SK-N-SH (cell line): ENCODE measurements at regions of chr3 and their contacts with region 1.

Region 1: GRCh38 chr3:171566803-171567422 is 106.7 kb upstream of the TNIK start:
- DNase-seq: peak; percentile 50
- H3K4me3 ChIP-seq: no peak overlapping the region
- H3K27ac ChIP-seq: no peak overlapping the region
- H3K4me1 ChIP-seq: no peaks in the 10 kb centered on the region; a peak in 1 of 4 replicates
- H3K27me3 ChIP-seq: no peaks in the 10 kb centered on the region
- CTCF ChIP-seq: peak; percentile 88
- EP300 ChIP-seq: no peak
- RAD21 ChIP-seq: peak; percentile 96

Region 2: DNA sequence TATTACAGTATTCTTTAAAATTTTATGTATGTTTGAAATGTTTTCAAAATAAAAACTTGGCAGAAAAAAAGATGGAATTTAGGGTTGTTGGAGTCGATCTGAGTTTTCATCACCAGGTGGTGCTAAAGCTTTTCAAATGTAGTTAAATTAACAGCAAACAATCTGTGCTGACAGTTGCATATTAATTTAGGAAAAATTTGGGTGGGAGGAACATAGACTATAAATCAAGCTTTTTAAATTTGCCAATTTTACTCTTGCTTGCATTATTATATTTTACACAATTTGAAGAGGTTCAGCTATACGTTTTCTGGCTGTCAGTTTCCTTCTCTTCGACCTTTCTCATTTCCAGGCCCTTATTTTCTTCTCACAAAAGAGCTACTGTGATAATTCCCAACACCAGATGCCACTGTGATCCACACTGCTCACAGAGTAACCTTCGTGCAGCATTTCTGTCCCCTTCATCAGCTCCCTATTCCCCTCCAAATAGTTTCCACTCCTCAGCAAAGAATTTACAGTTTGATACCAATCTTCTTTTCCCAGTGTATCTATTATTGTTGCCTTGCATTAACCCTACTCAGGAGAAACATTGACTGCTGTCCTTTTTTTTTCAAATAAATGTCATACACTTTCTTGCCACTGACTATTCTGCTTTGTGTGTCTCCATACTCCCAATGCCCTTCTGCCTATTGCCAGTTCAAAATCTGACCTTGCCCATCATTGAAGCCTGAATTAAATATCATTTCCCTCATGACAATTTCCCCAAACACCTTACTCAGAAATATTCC is 605.1 kb before region 1 on chr3:
- CTCF ChIA-PET with region 1: interaction called, 36 read pairs
- POLR2A ChIA-PET with region 1: no interaction called
- DNase-seq: peak; percentile 26
- H3K4me3 ChIP-seq: no peak overlapping the region
- H3K27ac ChIP-seq: peak overlapping the region in 1 of 2 experiments; percentile 2; a peak in 1 of 4 replicates
- H3K4me1 ChIP-seq: no peaks in the 10 kb centered on the region
- H3K27me3 ChIP-seq: no peaks in the 10 kb centered on the region
- CTCF ChIP-seq: peak; percentile 83
- EP300 ChIP-seq: no peak
- RAD21 ChIP-seq: peak; percentile 87

Region 3: DNA sequence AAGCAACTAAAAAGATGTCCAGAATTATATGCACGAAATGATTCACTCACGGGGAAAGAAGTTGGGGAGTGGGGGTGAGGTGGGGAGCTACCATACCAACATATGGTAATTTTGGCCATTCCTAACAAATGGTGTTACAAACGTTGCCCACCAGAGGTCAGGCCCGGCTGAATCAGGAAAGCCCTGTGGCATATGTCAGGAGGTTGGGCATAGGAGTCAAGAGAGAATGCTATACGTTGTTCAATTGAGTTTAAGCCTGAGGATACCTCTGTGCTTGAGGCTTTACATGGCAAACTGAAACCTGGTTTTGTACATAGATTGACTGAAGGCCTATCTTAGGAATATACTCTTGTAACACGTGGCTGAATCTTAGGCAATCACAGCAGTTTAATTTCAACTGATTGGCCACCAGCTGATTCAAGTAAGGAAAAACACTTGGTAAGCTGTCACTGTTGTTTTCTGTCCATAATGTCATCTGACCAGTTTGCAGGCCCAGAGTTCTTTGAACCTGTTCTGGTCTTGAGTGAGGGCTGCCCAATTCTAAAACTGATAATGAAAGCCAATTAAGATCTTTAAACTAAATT is 517.0 kb before region 1 on chr3:
- CTCF ChIA-PET with region 1: interaction called, 57 read pairs
- POLR2A ChIA-PET with region 1: no interaction called
- DNase-seq: peak; percentile 63
- H3K4me3 ChIP-seq: no peak overlapping the region
- H3K27ac ChIP-seq: no peak overlapping the region
- H3K4me1 ChIP-seq: peaks cover 0 to 2% of the 10 kb centered on the region in 2 experiments; a peak in 1 of 4 replicates
- H3K27me3 ChIP-seq: no peaks in the 10 kb centered on the region
- CTCF ChIP-seq: peak; percentile 73
- EP300 ChIP-seq: no peak
- RAD21 ChIP-seq: peak; percentile 88

Region 4: GRCh38 chr3:171187706-171188290 is 379.1 kb before region 1 on chr3:
- CTCF ChIA-PET with region 1: interaction called, 56 read pairs
- POLR2A ChIA-PET with region 1: no interaction called
- DNase-seq: peak; percentile 48
- H3K4me3 ChIP-seq: no peak overlapping the region; a peak in 1 of 4 replicates
- H3K27ac ChIP-seq: no peak overlapping the region
- H3K4me1 ChIP-seq: peaks cover 5 to 7% of the 10 kb centered on the region in 2 experiments
- H3K27me3 ChIP-seq: no peaks in the 10 kb centered on the region
- CTCF ChIP-seq: peak; percentile 75
- EP300 ChIP-seq: no peak
- RAD21 ChIP-seq: peak; percentile 79

Region 5: GRCh38 chr3:171994646-171995428 is 427.9 kb after region 1 on chr3:
- CTCF ChIA-PET with region 1: no interaction called
- POLR2A ChIA-PET with region 1: no interaction called
- DNase-seq: no peak
- H3K4me3 ChIP-seq: no peak overlapping the region
- H3K27ac ChIP-seq: peak overlapping the region in 1 of 2 experiments; percentile 30; a peak in 2 of 4 replicates
- H3K4me1 ChIP-seq: no peaks in the 10 kb centered on the region; a peak in 1 of 4 replicates
- H3K27me3 ChIP-seq: no peaks in the 10 kb centered on the region
- CTCF ChIP-seq: no peak
- EP300 ChIP-seq: peak in 1 of 2 experiments; percentile 16; a peak in 1 of 4 replicates
- RAD21 ChIP-seq: no peak